T-cell (primary cell): ENCODE measurements at regions of chr5 and their contacts with region 1.

Region 1: GRCh38 chr5:10577371-10578292 is 13.8 kb downstream of the ANKRD33B start:
- DNase-seq: no peak
- ATAC-seq: no peak
- H3K4me3 ChIP-seq: no peak overlapping the region
- H3K4me3 Mint-ChIP-seq: no peak overlapping the region
- H3K27ac ChIP-seq: no peak overlapping the region
- H3K27ac Mint-ChIP-seq: no peak overlapping the region
- H3K4me1 ChIP-seq: peaks cover 0 to 3% of the 10 kb centered on the region in 2 experiments
- H3K4me1 Mint-ChIP-seq: peaks cover 16 to 32% (median 19%) of the 10 kb centered on the region in 3 donors
- H3K27me3 ChIP-seq: peaks cover 0 to 3% of the 10 kb centered on the region in 2 experiments
- H3K27me3 Mint-ChIP-seq: no peaks in the 10 kb centered on the region

Region 2: DNA sequence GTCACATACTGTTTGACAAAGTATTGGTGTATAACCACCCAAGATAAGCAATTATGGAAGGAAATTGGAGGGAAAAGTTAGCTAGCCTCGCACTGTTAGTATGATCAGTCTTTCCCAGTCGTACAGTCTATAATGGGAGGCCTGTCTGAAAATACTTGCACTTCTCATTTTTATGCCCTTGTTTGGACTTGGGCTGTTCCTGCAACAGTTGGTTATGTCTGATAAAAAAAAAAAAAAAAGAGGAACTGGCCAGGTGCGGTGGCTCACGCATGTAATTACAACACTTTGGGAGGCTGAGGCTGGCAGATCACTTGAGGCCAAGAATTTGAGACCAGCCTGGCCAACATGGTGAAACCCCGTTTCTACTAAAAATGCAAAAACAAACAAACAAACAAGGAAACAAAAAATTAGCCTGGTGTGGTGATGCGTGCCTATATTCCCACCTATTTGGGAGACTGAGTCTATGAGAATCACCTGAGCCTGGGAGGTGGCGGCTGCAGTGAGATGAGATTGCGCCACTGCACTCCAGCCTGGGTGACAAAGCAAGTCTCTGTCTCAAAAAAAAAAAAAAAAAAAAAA is 72.0 kb before region 1 on chr5:
- CTCF ChIA-PET with region 1: no interaction called
- POLR2A ChIA-PET with region 1: no interaction called
- DNase-seq: no peak
- ATAC-seq: no peak
- H3K4me3 ChIP-seq: no peak overlapping the region
- H3K4me3 Mint-ChIP-seq: no peak overlapping the region
- H3K27ac ChIP-seq: no peak overlapping the region
- H3K27ac Mint-ChIP-seq: no peak overlapping the region
- H3K4me1 ChIP-seq: no peaks in the 10 kb centered on the region
- H3K4me1 Mint-ChIP-seq: no peaks in the 10 kb centered on the region
- H3K27me3 ChIP-seq: peaks cover 0 to 10% of the 10 kb centered on the region in 2 experiments
- H3K27me3 Mint-ChIP-seq: peaks cover 3 to 5% of the 10 kb centered on the region in 2 donors

Region 3: GRCh38 chr5:10634050-10634449 is 56.4 kb after region 1 on chr5:
- CTCF ChIA-PET with region 1: interaction called, 3 to 10 read pairs
- POLR2A ChIA-PET with region 1: no interaction called
- DNase-seq: no peak
- ATAC-seq: no peak
- H3K4me3 ChIP-seq: no peak overlapping the region
- H3K4me3 Mint-ChIP-seq: peak overlapping the region in 2 of 3 donors; percentile 17 to 60
- H3K27ac ChIP-seq: peak overlapping the region; percentile 1
- H3K27ac Mint-ChIP-seq: peak overlapping the region in 1 of 2 donors; percentile 81
- H3K4me1 ChIP-seq: peaks cover 2 to 51% of the 10 kb centered on the region in 2 experiments
- H3K4me1 Mint-ChIP-seq: peaks cover 17 to 59% (median 25%) of the 10 kb centered on the region in 3 donors
- H3K27me3 ChIP-seq: peaks cover 0 to 8% of the 10 kb centered on the region in 2 experiments
- H3K27me3 Mint-ChIP-seq: peaks cover 0 to 5% of the 10 kb centered on the region in 2 donors

Region 4: GRCh38 chr5:10994088-10994986 is 416.7 kb after region 1 on chr5:
- CTCF ChIA-PET with region 1: no interaction called
- POLR2A ChIA-PET with region 1: no interaction called
- DNase-seq: no peak
- ATAC-seq: no peak
- H3K4me3 ChIP-seq: no peak overlapping the region
- H3K4me3 Mint-ChIP-seq: no peak overlapping the region
- H3K27ac ChIP-seq: no peak overlapping the region
- H3K27ac Mint-ChIP-seq: no peak overlapping the region
- H3K4me1 ChIP-seq: no peaks in the 10 kb centered on the region
- H3K4me1 Mint-ChIP-seq: no peaks in the 10 kb centered on the region
- H3K27me3 ChIP-seq: peaks cover 0 to 7% of the 10 kb centered on the region in 2 experiments
- H3K27me3 Mint-ChIP-seq: peaks cover 0 to 19% of the 10 kb centered on the region in 2 donors